ENCODE measurements at regions of chr14 and their contacts with region 1.

Region 1: DNA sequence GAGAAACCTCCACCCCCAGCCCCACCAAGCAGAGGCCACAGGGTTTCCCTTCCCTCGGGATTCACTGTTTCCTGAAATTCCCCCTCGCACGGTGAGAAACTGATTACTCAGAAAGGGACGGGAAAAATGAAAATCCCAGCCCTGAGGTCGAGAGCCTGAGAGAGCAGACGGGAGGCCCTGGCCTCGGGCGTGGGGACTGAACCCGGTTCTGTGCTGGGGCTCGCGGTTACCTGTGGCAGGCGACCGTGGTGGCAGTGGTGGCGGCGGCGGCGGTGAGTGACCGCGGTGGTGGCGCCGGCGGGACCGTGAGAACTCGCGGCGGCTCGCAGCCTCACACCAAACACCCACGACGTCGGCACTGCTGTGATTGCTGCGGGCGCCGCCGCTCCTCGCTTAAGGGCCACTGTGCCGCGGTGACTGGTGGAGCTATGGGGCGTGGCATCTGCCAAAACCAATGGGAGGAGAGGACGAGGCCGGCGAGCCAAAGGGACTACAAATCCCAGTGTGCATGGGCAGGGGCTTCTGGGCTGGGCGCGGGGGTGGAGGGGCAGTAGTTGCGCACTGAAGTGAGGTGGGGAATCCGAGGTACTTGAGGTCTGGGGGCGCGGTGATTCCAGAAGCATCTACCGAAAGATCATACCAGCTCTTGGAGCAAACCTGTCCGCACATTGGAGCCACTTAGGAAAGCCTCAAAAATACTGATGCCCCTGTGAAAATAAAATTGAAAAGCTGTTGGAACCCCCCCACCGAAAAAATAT is at the start of gene LGMN:
- DNase-seq: peak; percentile 92
- ATAC-seq: peak; percentile 98
- H3K4me3 ChIP-seq: peak within 1 kb of the TSS; percentile 94
- H3K27ac ChIP-seq: peak within 1 kb of the TSS; percentile 7; the same call in 1 of the 2 replicates
- H3K4me1 ChIP-seq: peaks cover 6% of the 10 kb centered on the region
- H3K27me3 ChIP-seq: no peaks in the 10 kb centered on the region
- CTCF ChIP-seq: no peak
- total RNA-seq, gene LGMN: 44.5 and 46.8 TPM in 2 replicates

Region 2: GRCh38 chr14:92712654-92713051 is 35.8 kb before region 1 on chr14:
- CTCF ChIA-PET with region 1: no interaction called
- POLR2A ChIA-PET with region 1: no interaction called
- intact Hi-C with region 1: loop called (anchors 5 kb)
- DNase-seq: no peak
- ATAC-seq: no peak
- H3K4me3 ChIP-seq: no peak overlapping the region
- H3K27ac ChIP-seq: no peak overlapping the region
- H3K4me1 ChIP-seq: peaks cover 4% of the 10 kb centered on the region; the same call in 1 of the 2 replicates
- H3K27me3 ChIP-seq: no peaks in the 10 kb centered on the region
- CTCF ChIP-seq: no peak

Region 3: GRCh38 chr14:92726429-92727262 is 21.8 kb before region 1 on chr14:
- CTCF ChIA-PET with region 1: interaction called, 4 read pairs
- POLR2A ChIA-PET with region 1: interaction called, 3 read pairs
- intact Hi-C with region 1: loop called (anchors 2 kb)
- DNase-seq: no peak
- ATAC-seq: peak; percentile 30
- H3K4me3 ChIP-seq: no peak overlapping the region; the same call in 1 of the 2 replicates
- H3K27ac ChIP-seq: peak overlapping the region; percentile 85
- H3K4me1 ChIP-seq: peaks cover 41% of the 10 kb centered on the region
- H3K27me3 ChIP-seq: no peaks in the 10 kb centered on the region
- CTCF ChIP-seq: no peak

Region 4: DNA sequence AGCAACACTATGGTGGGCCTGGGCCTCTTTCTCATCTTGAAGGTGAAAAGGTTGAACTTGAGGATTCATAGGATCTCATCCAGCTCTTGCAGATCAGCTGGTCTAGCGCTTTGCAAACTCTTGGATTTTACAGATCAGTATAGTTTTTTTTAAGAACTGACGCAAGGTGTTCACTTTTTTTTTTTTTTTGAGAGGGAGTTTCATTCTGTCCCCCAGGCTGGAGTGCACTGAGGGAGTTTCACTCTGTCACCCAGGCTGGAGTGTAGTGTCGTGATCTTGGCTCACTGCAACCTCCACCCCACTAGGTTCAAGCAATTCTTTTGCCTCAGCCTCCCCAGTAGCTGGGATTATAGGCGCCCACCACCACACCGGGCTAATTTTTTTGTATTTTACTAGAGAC is 20.4 kb after region 1 on chr14:
- CTCF ChIA-PET with region 1: no interaction called
- POLR2A ChIA-PET with region 1: interaction called, 10 read pairs
- intact Hi-C with region 1: no loop called
- DNase-seq: no peak
- ATAC-seq: no peak
- H3K4me3 ChIP-seq: no peak overlapping the region
- H3K27ac ChIP-seq: no peak overlapping the region
- H3K4me1 ChIP-seq: no peaks in the 10 kb centered on the region
- H3K27me3 ChIP-seq: no peaks in the 10 kb centered on the region
- CTCF ChIP-seq: no peak

Region 5: GRCh38 chr14:92783816-92784431 is 35.5 kb after region 1 on chr14:
- CTCF ChIA-PET with region 1: no interaction called
- POLR2A ChIA-PET with region 1: no interaction called
- intact Hi-C with region 1: loop called (anchors 1 kb)
- DNase-seq: peak; percentile 85
- ATAC-seq: peak; percentile 93
- H3K4me3 ChIP-seq: no peak overlapping the region
- H3K27ac ChIP-seq: peak overlapping the region; percentile 53; the same call in 1 of the 2 replicates
- H3K4me1 ChIP-seq: peaks cover 26% of the 10 kb centered on the region
- H3K27me3 ChIP-seq: no peaks in the 10 kb centered on the region
- CTCF ChIP-seq: peak; percentile 83

Measured in PC-3 (cell line).